Astrocyte of the cerebellum (primary cell): ENCODE measurements at regions of chr9 and their contacts with region 1.

Region 1: DNA sequence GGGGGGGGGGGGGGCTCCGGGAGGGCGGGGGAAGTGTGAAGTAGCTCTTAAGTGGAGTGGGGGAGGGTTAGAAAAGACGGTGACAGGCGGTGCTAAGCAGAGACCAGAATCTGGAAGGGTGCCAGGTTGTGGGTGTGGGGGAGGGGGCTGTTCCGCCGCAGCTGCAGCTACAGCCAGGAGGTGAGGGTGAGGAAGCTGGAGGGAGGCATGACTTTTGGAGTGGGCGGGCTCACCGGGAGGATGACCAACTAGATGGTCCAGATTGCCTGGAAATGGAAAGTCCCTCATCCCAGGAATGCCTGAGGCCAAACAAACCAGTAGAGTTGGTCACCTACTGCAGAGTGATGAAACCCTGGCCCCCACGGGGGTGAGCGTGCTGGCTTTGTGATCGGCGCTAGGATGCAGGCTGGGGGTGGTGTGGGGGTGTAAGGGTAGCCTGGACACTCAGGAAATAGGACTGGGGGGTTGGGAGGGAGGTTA is 158.1 kb upstream of the SHB start:
- DNase-seq: peak; percentile 26
- H3K4me3 ChIP-seq: no peak overlapping the region
- CTCF ChIP-seq: no peak

Region 2: GRCh38 chr9:37903647-37904444 is 323.3 kb before region 1 on chr9 and contains the start of gene SLC25A51:
- in situ Hi-C with region 1: loop called (anchors 25 kb)
- DNase-seq: peak; percentile 83
- H3K4me3 ChIP-seq: peak within 1 kb of the TSS; percentile 73
- CTCF ChIP-seq: peak; percentile 87

Region 3: GRCh38 chr9:38687387-38687842 is 460.3 kb after region 1 on chr9:
- in situ Hi-C with region 1: no loop called
- DNase-seq: no peak
- H3K4me3 ChIP-seq: no peak overlapping the region
- CTCF ChIP-seq: no peak